CD8-positive, alpha-beta memory T cell (primary cell): ENCODE measurements at regions of chr11 and their contacts with region 1.

Region 1: DNA sequence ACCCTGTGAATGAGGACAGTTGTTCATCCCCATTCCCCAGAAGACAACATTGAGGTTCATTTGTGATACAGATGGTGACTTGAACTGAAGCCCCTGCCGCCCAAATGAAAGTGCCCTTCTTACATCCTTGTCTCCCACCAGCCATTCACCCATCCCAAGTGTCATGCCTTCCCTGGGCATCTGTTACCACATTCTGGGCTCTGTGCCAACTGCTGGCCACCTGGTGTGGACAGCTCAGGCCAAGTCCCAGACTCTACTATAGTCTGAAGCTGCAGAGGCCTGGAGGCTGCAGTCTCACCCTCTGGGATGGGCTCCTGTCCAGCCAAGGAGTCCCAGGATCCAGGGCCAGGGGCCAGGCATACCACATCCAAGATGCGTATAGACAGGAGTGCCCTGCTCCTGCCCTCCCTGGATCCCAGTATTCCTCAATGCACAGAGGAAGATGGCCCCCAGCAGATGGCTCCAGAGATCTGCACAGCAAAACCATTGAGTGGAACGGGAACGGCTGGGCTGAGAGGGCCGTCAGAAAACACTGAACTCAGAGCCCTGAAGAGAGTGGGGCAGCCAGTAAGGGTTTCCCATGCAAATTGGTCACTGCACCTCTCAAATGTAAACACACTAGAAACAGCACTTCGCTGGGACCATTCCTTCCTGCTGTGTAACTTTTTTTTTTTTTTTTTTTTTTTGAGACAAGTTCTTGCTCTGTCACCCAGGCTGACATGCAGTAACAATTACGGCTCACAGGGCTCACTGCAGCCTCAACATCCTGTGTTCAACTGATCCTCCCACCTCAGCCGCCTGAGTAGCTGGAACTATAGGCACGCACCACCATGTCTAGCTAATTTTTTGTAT is 22.8 kb downstream of the ARRB1 start:
- DNase-seq: peak in 4 of 5 donors; percentile 10 to 72 (median 60)
- H3K4me3 ChIP-seq: peak overlapping the region; percentile 40
- H3K4me3 Mint-ChIP-seq: peak overlapping the region in 6 of 7 donors; percentile 41 to 66 (median 55)
- H3K27ac ChIP-seq: peak overlapping the region; percentile 52
- H3K27ac Mint-ChIP-seq: peak overlapping the region; percentile 59 to 86 (median 75)
- H3K4me1 ChIP-seq: peaks cover 43% of the 10 kb centered on the region
- H3K4me1 Mint-ChIP-seq: peaks cover 44 to 65% (median 57%) of the 10 kb centered on the region in 3 donors
- H3K27me3 ChIP-seq: no peaks in the 10 kb centered on the region
- H3K27me3 Mint-ChIP-seq: no peaks in the 10 kb centered on the region

Region 2: GRCh38 chr11:75383246-75383645 is 54.6 kb after region 1 on chr11:
- CTCF ChIA-PET with region 1: interaction called, 41 read pairs
- POLR2A ChIA-PET with region 1: interaction called, 14 read pairs
- DNase-seq: peak in 3 of 5 donors; percentile 16 to 51 (median 20)
- H3K4me3 ChIP-seq: no peak overlapping the region
- H3K4me3 Mint-ChIP-seq: peak overlapping the region in 6 of 7 donors; percentile 13 to 62 (median 60)
- H3K27ac ChIP-seq: no peak overlapping the region
- H3K27ac Mint-ChIP-seq: peak overlapping the region in 6 of 8 donors; percentile 21 to 81 (median 71)
- H3K4me1 ChIP-seq: peaks cover 19% of the 10 kb centered on the region
- H3K4me1 Mint-ChIP-seq: peaks cover 15 to 17% (median 16%) of the 10 kb centered on the region in 3 donors
- H3K27me3 ChIP-seq: no peaks in the 10 kb centered on the region
- H3K27me3 Mint-ChIP-seq: no peaks in the 10 kb centered on the region

Region 3: GRCh38 chr11:75399344-75400145 is 70.9 kb after region 1 on chr11 and contains the start of gene RPS3:
- CTCF ChIA-PET with region 1: no interaction called
- POLR2A ChIA-PET with region 1: interaction called, 12 read pairs
- DNase-seq: peak; percentile 78 to 92 (median 85)
- H3K4me3 ChIP-seq: peak within 1 kb of the TSS; percentile 73
- H3K4me3 Mint-ChIP-seq: peak within 1 kb of the TSS; percentile 91 to 98 (median 95)
- H3K27ac ChIP-seq: peak within 1 kb of the TSS; percentile 88
- H3K27ac Mint-ChIP-seq: peak within 1 kb of the TSS; percentile 87 to 99 (median 96)
- H3K4me1 ChIP-seq: peaks cover 25% of the 10 kb centered on the region
- H3K4me1 Mint-ChIP-seq: peaks cover 48 to 53% (median 48%) of the 10 kb centered on the region in 3 donors
- H3K27me3 ChIP-seq: no peaks in the 10 kb centered on the region
- H3K27me3 Mint-ChIP-seq: no peaks in the 10 kb centered on the region
- total RNA-seq, gene RPS3: 3,916 to 3,935 TPM

Region 4: DNA sequence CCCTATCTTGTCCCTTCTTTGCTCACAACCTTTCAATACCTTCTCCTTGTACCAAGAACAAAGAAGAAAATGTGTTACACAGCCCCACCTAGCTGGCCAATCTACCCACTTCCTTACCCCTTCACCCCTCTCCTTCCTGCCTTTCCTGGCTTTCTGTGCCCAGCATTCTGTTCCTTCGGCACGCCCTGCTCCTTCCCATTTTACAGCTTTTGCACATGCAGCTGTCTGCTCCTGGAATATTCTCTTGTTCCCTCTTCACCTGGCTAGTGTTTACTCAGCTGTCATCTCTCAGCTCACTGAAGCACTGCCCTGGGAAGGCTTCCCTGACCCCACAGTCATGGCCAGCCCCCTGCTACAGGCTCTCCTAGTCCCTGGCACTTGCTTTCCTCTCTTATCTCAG is 264.1 kb after region 1 on chr11:
- CTCF ChIA-PET with region 1: no interaction called
- POLR2A ChIA-PET with region 1: no interaction called
- DNase-seq: no peak
- H3K4me3 ChIP-seq: no peak overlapping the region
- H3K4me3 Mint-ChIP-seq: peak overlapping the region in 2 of 7 donors; percentile 6 to 42
- H3K27ac ChIP-seq: no peak overlapping the region
- H3K27ac Mint-ChIP-seq: peak overlapping the region in 6 of 8 donors; percentile 17 to 81 (median 62)
- H3K4me1 ChIP-seq: peaks cover 6% of the 10 kb centered on the region
- H3K4me1 Mint-ChIP-seq: peaks cover 12 to 16% (median 15%) of the 10 kb centered on the region in 3 donors
- H3K27me3 ChIP-seq: peaks cover 3% of the 10 kb centered on the region
- H3K27me3 Mint-ChIP-seq: peaks cover 0 to 4% of the 10 kb centered on the region in 2 donors